ENCODE measurements at regions of chr3 and their contacts with region 1.

Region 1: DNA sequence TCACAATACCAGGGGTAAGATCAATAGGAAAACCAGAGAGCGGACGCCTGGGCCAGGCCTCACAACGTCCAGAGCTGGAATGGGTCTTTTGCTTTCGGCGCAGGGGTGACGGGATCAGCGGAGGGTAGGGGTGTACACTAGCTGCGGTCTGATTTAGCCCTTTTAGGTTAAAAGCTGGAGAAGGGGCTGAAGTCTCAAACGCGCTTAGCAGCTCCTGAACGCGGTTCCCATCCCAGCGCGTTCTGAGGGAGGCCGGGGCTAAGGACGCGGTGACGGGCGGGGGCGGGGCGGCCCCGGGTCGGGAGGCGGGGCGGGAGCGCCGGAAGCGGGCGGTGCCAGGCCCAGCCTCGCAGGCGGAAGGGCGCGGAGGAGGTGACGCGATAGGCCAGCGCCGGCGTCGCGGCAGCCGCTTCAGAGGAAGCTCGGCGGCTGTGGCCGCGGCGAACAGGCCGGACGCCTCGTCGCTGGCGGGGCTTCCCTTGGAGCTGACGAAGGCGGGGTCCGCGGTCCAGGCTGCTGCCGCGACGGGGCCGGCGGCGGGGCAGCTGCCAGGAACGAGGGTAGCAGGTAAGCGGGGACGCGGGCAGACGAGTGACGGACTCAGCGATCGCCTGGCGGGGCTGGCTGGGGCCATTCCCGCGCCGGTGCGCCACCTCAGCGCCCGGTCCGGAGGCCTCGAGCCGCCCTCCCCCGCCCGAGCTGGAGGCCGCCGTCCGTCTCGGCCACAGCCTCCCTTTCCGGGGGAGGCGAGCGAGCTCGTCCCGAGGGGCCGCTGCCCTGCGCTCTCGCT is at the start of gene SENP5:
- DNase-seq: peak; percentile 89 to 92
- ATAC-seq: peak; percentile 98 to 100 (median 99)
- H3K4me3 ChIP-seq: peak within 1 kb of the TSS; percentile 82 to 100 (median 99)
- H3K27ac ChIP-seq: peak within 1 kb of the TSS; percentile 83 to 98 (median 94)
- H3K4me1 ChIP-seq: peaks cover 4 to 43% (median 25%) of the 10 kb centered on the region in 9 donors
- H3K27me3 ChIP-seq: no peaks in the 10 kb centered on the region
- CTCF ChIP-seq: peak in 1 of 9 donors; percentile 6
- total RNA-seq, gene SENP5: 15.2 to 24.9 (median 20.6) TPM

Region 2: DNA sequence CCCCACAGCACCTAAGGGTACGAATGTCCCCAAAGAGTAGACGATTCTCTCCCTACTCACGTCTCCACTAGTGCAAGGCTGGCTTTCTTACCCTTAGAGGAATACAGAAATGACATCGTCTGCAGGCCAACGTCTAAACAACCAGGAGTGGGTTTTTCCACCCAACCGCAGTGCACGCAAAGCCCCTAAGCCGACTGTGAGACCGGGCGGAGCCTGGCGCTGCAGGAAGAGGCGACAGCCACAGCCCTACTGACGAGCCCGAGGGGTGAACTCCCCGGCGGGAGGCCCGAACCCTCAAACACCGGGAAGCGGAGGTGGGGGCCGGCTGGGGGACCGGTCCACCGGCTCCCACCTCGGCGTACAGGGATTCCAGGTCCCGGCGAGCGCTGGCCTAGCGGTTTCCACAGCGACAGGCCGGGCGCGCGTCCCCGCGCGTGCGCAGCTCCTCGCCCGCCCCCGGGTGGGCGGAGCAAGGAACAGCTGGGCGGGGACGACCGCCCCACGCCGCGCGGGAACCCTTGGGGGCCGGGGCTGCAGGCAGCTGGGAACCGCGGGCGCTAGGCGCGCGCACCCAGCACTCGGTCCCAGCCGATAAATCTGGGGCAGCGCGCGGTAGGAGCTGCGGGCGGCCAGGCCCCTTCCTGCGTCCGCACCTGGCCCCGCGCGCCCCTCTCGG is 155.7 kb before region 1 on chr3 and contains the starts of genes CEP19 and PIGX:
- intact Hi-C with region 1: loop called in 1 of 10 experiments (anchors 2 kb)
- DNase-seq: peak; percentile 83 to 89
- ATAC-seq: peak; percentile 97 to 99 (median 98)
- H3K4me3 ChIP-seq: peak within 1 kb of the TSS; percentile 77 to 98 (median 86)
- H3K27ac ChIP-seq: peak within 1 kb of the TSS; percentile 72 to 97 (median 93)
- H3K4me1 ChIP-seq: peaks cover 7 to 23% (median 16%) of the 10 kb centered on the region in 9 donors
- H3K27me3 ChIP-seq: no peaks in the 10 kb centered on the region
- CTCF ChIP-seq: peak in 2 of 9 donors; percentile 22 to 23
- total RNA-seq, gene CEP19: 0.55 to 2.3 (median 0.84) TPM
- total RNA-seq, gene PIGX: 13.9 to 21.9 (median 16.6) TPM

Region 3: GRCh38 chr3:196894557-196895297 is 27.0 kb after region 1 on chr3:
- intact Hi-C with region 1: no loop called
- DNase-seq: no peak
- ATAC-seq: no peak
- H3K4me3 ChIP-seq: no peak overlapping the region
- H3K27ac ChIP-seq: no peak overlapping the region
- H3K4me1 ChIP-seq: peaks cover 0 to 13% (median 4%) of the 10 kb centered on the region in 9 donors
- H3K27me3 ChIP-seq: no peaks in the 10 kb centered on the region
- CTCF ChIP-seq: no peak

Region 4: DNA sequence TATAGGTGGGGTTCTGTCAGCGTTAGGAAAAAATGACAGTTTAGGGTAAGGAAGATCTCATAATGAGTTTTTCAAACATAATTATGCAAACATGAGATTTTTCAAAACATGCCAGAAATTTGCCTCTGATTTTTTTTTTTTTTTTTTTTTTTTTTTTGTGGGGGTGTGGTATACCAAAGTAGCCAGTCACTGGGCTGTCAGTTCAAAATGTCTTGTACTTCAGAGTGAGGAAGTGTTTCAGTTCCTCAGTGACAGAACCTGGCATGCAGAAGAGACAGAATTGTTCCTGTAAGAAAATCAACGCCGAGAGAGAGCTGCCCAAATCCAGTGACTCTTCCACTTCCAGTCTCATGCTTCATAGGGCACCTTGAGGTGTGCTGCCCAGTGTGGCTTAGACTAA is 64.9 kb after region 1 on chr3:
- intact Hi-C with region 1: loop called in 1 of 10 experiments (anchors 10 kb)
- DNase-seq: no peak
- ATAC-seq: no peak
- H3K4me3 ChIP-seq: no peak overlapping the region
- H3K27ac ChIP-seq: no peak overlapping the region
- H3K4me1 ChIP-seq: no peaks in the 10 kb centered on the region
- H3K27me3 ChIP-seq: no peaks in the 10 kb centered on the region
- CTCF ChIP-seq: no peak

Measured in heart right ventricle (tissue), 16 donors.